ENCODE measurements at regions of chrX and their contacts with region 1.

Region 1: GRCh38 chrX:37396745-37397144 is 47.6 kb downstream of the PRRG1 start:
- DNase-seq: no peak
- H3K4me3 ChIP-seq: no peak overlapping the region
- H3K27ac ChIP-seq: no peak overlapping the region
- H3K4me1 ChIP-seq: no peaks in the 10 kb centered on the region
- H3K27me3 ChIP-seq: no peaks in the 10 kb centered on the region
- CTCF ChIP-seq: no peak
- POLR2A ChIP-seq: no peak

Region 2: DNA sequence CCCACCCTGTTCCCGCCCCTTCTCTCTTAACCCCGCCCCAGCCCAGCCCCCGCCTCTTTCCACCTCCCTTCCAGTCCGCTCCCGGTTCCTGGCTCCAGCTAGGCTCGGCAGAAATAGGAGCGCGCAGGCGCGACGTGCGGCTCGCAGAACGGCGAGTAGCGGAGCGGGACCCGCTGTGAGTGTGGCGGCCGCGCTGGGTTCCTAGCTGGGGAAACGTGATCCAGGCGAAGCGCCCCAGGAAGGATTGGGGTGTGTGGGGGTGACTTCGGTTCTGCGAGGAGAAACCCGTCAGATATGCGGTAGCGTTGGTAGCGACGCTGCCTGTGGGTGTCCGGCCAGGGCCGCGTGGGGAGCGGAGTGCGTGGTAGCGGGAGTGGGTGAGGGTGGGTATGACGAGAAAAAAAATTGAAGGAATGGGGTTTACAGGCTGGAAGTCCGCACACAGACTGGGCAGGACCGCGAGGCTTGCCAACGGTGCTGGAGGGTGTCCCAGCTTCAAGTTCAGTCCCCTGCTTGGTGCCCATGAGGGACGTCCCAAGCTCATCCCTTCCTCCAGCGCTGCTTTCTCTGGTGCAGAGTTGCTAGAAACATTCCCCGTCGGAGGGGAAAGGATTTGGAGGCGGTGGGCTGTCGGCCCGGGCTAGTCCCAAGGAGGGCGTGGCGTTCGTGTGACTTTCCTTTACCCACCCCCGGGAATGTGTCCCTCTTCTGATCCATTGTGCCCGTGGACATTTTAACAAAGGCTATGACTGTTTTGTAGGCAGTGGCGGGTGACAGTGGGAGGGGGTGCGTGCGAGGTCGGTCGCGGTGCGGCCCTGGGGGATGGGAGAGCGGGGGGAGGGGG is 47.3 kb before region 1 on chrX and contains the start of gene PRRG1:
- intact Hi-C with region 1: no loop called
- DNase-seq: peak; percentile 75 to 82
- H3K4me3 ChIP-seq: peak within 1 kb of the TSS; percentile 32 to 53 (median 37)
- H3K27ac ChIP-seq: peak within 1 kb of the TSS; percentile 81 to 85 (median 82)
- H3K4me1 ChIP-seq: peaks cover 0 to 4% of the 10 kb centered on the region in 2 donors
- H3K27me3 ChIP-seq: no peaks in the 10 kb centered on the region
- CTCF ChIP-seq: no peak
- POLR2A ChIP-seq: peak in 1 of 2 donors; percentile 76
- total RNA-seq, gene PRRG1: 23.7 to 28.5 (median 24.0) TPM

Region 3: DNA sequence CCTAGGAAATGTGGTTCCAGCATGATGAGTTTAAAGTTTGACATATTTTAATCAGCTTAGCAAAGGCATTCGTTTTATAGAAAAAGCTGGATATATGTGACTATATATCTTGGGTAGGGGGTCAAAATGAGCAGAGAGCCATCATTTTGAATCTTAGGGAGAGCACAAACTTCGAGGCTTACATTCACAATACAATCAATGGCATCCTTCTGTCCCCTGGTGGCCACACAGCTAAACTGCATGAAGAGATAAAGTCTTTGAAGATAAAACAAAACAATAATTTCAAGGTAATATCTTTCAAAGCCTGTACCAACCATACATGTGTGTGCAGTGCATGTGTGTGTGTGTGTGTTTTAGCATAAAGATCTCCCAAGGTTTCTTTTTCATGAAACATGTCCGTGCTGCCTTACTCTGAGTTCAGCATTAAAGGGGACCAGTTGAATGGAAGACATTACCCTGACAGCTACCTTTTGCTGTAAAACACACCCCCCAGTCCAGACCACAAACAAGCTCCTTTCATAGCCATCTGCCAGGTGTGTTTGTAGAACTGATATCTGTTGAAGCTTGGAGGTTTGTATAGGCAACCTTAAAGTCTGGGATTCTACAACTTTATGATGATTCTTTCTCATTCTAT is 428.6 kb after region 1 on chrX:
- intact Hi-C with region 1: loop called (anchors 10 kb)
- DNase-seq: peak; percentile 36 to 54
- H3K4me3 ChIP-seq: no peak overlapping the region
- H3K27ac ChIP-seq: no peak overlapping the region
- H3K4me1 ChIP-seq: no peaks in the 10 kb centered on the region
- H3K27me3 ChIP-seq: no peaks in the 10 kb centered on the region
- CTCF ChIP-seq: peak; percentile 64 to 86 (median 76)
- POLR2A ChIP-seq: no peak